PC-3 (cell line): ENCODE measurements at regions of chr20 and their contacts with region 1.

Region 1: GRCh38 chr20:43408848-43409576 is 48.7 kb upstream of the SRSF6 start:
- DNase-seq: peak; percentile 65
- ATAC-seq: peak; percentile 78
- H3K4me3 ChIP-seq: no peak overlapping the region
- H3K27ac ChIP-seq: no peak overlapping the region
- H3K4me1 ChIP-seq: no peaks in the 10 kb centered on the region
- H3K27me3 ChIP-seq: peaks cover 32% of the 10 kb centered on the region
- CTCF ChIP-seq: peak; percentile 95

Region 2: GRCh38 chr20:41955999-41956705 is 1452.9 kb before region 1 on chr20:
- CTCF ChIA-PET with region 1: no interaction called
- POLR2A ChIA-PET with region 1: no interaction called
- intact Hi-C with region 1: loop called (anchors 5 kb)
- DNase-seq: peak; percentile 28
- ATAC-seq: no peak
- H3K4me3 ChIP-seq: no peak overlapping the region
- H3K27ac ChIP-seq: no peak overlapping the region
- H3K4me1 ChIP-seq: no peaks in the 10 kb centered on the region
- H3K27me3 ChIP-seq: no peaks in the 10 kb centered on the region
- CTCF ChIP-seq: peak; percentile 61

Region 3: DNA sequence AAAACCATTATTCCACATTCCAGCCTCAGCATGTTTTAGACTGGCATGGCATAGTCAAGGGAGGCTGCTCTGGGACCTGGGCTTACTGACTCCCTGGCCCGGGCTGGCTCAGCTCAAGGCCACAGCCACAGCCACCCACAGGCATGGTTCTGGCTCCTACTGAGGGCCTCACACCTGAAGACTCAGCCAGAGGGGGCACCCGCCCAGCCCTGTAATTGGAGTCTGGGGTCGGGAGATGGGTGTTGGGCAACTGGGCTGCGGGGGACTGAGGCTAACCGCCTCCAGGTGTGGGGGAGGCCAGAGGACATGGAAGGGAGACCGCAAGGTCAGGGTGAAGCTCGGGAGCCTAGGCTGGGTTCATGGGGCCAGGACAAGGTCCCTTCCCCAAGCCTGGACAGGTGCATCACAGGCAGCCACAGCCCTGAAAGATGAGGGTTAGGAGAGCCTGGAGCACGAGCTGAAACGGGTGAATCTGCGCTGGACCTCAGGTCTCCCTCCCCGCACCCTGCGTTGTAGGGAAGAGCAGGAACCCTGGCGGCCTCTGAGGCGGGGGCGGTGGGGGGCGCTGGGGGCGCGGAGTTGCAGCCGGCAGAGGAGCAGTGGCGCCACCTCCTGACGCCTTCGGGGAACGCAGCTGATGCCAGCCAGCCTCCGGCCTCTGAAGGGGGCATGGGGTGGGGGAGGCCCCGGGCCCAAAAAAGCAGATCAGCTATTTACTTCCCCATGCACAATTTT is 19.0 kb before region 1 on chr20:
- CTCF ChIA-PET with region 1: no interaction called
- POLR2A ChIA-PET with region 1: no interaction called
- intact Hi-C with region 1: no loop called
- DNase-seq: no peak
- ATAC-seq: no peak
- H3K4me3 ChIP-seq: no peak overlapping the region
- H3K27ac ChIP-seq: no peak overlapping the region
- H3K4me1 ChIP-seq: no peaks in the 10 kb centered on the region
- H3K27me3 ChIP-seq: peaks cover 34% of the 10 kb centered on the region
- CTCF ChIP-seq: peak; percentile 51